Activated T-helper 1 cell treated with anti-CD3 and anti-CD28 coated beads, Interleukin-12 subunit alpha, Interleukin-12 subunit beta, Interleukin-2, Interleukin-4 antibody, amounts not matched to agents 30 ng/mL and 10 ng/mL and 1 ng/mL, durations not matched to agents 14 hours and 24 hours and 36 hours (primary cell): ENCODE measurements at regions of chr15 and their contacts with region 1.

Region 1: GRCh38 chr15:34223904-34224596 is 766 bp upstream of the EMC4 start:
- DNase-seq: no peak
- H3K4me3 Mint-ChIP-seq: peak overlapping the region; percentile 90
- H3K27ac Mint-ChIP-seq: peak overlapping the region; percentile 98
- H3K4me1 Mint-ChIP-seq: peaks cover 35% of the 10 kb centered on the region
- H3K27me3 Mint-ChIP-seq: no peaks in the 10 kb centered on the region

Region 2: DNA sequence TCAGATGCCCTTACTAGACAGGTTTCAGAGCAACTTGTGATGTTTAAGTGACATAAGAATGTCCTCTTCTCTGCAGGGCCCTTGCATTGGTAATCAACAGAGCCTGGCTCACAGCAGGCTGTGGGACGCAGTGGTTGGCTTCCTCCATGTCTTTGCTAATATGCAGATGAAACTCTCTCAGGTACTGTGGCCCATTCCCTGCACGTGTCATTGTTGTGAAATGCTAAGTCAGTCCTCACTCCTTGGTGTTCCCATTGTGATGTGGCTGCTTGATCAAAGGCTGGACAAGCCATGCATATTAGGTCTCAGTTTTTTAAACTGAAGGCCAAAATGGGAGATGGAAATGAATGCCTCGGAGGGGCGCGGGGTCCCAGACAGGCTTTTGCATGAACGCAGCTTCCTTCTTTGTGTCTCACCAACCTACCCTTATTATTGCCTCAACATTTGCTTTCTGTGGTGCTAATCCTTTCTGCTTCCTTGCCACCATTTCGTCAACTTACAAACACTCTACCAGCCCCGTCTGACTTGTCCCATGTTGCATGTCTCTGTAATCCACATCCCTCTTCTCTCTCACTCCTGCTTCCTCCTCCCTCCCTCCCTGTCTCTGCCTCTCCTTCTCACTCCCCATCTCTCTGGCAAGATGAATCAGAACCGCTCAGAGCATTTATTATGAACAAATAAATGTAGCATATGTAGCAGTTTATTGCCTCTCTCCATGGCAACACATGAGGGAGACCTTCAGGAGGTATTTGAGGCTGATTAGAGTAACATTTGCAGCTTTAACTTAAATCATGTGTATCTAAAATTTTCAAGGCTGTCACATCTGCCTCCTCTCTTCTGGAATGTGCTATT is 388.9 kb before region 1 on chr15:
- intact Hi-C with region 1: no loop called
- DNase-seq: no peak
- H3K4me3 Mint-ChIP-seq: no peak overlapping the region
- H3K27ac Mint-ChIP-seq: no peak overlapping the region
- H3K4me1 Mint-ChIP-seq: no peaks in the 10 kb centered on the region
- H3K27me3 Mint-ChIP-seq: no peaks in the 10 kb centered on the region

Region 3: GRCh38 chr15:34154725-34155204 is 69.3 kb before region 1 on chr15:
- intact Hi-C with region 1: no loop called
- DNase-seq: no peak
- H3K4me3 Mint-ChIP-seq: no peak overlapping the region
- H3K27ac Mint-ChIP-seq: no peak overlapping the region
- H3K4me1 Mint-ChIP-seq: no peaks in the 10 kb centered on the region
- H3K27me3 Mint-ChIP-seq: no peaks in the 10 kb centered on the region

Region 4: DNA sequence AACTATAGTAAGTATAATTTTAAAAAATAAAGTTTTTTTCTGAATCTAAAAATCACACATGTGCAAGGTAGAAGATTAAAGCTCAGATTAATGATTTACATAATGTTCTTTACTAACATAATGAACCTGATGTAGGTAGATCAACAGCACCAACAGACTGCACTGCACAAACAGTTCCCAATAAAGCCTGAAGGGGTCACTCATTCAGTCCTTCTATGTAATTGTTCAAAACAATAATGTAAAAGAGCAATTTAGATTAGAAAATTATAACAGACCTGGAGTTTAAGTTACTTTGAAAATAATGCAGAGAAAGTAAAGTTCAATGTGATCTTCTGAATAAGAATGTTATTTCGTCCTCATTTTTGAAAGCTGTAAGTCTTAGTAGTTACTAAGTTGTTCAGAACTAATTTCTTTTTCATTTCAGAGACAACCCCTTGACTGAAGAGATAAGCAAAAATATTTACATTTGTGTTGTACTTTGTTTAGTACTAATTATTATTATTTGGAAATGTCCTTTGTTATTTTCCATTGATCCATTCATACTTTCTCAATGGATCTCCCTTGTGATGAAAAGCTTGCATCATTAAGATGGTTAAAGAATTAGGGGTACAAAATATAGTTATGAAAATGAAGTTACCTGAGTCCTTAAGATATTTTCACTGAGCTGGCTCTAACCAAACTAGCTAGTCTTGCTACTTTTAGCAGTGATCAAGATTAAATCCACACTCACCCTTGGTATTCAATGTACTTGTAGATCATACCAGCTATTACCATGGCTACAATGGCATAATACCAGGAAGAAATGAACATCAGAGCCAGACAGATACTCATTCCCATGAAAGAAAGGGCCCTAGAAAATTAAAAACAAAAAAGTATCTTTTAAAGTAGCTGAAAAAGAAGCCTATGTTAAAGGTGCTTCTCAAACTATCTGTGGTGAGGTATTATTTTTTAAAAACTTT is 17.6 kb after region 1 on chr15:
- intact Hi-C with region 1: loop called (anchors 1 kb)
- DNase-seq: no peak
- H3K4me3 Mint-ChIP-seq: no peak overlapping the region
- H3K27ac Mint-ChIP-seq: no peak overlapping the region
- H3K4me1 Mint-ChIP-seq: peaks cover 38% of the 10 kb centered on the region
- H3K27me3 Mint-ChIP-seq: no peaks in the 10 kb centered on the region

Region 5: DNA sequence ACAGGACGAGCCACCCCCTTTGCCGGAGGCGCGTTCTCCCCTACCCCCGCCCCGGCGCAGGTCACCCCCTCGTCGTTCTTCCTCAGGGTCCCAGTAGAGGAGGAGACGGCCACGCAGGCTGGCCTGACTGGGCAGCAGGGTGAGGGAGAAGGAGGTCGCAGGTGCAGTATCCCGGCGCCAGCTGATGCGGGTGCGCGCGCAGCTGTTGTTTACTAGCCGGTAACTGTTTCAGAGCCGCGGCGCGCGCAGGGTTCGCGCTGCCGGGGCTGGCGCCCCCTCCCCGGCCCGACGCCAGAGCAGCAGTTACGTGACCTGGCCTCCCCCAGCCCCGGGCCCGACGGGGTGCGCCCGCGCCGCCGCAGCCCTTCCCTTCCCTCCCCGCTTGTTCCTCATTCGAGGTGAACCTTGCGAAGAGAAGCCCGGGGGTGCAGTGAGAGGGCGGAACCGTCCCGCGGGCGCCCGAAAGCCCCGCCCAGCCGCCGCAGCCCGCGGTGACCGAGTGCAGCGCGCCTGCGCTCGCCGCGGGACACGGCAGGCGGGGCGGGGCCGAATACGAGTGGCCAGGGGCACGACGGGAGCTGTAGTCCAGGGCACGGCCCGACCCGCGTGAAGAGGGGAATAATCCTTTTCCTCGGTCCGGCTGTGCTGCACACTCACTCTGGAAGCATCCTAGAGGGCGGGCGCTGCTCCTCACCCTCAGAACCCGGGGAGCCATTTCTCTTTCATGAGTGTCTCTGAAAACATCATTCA is 113.7 kb after region 1 on chr15 and contains the start of gene SLC12A6:
- intact Hi-C with region 1: loop called (anchors 1 kb)
- DNase-seq: peak; percentile 90
- H3K4me3 Mint-ChIP-seq: peak within 1 kb of the TSS; percentile 97
- H3K27ac Mint-ChIP-seq: peak within 1 kb of the TSS; percentile 97
- H3K4me1 Mint-ChIP-seq: peaks cover 66% of the 10 kb centered on the region
- H3K27me3 Mint-ChIP-seq: no peaks in the 10 kb centered on the region
- total RNA-seq, gene SLC12A6: 33.2 and 36.4 TPM in 2 replicates

Region 6: DNA sequence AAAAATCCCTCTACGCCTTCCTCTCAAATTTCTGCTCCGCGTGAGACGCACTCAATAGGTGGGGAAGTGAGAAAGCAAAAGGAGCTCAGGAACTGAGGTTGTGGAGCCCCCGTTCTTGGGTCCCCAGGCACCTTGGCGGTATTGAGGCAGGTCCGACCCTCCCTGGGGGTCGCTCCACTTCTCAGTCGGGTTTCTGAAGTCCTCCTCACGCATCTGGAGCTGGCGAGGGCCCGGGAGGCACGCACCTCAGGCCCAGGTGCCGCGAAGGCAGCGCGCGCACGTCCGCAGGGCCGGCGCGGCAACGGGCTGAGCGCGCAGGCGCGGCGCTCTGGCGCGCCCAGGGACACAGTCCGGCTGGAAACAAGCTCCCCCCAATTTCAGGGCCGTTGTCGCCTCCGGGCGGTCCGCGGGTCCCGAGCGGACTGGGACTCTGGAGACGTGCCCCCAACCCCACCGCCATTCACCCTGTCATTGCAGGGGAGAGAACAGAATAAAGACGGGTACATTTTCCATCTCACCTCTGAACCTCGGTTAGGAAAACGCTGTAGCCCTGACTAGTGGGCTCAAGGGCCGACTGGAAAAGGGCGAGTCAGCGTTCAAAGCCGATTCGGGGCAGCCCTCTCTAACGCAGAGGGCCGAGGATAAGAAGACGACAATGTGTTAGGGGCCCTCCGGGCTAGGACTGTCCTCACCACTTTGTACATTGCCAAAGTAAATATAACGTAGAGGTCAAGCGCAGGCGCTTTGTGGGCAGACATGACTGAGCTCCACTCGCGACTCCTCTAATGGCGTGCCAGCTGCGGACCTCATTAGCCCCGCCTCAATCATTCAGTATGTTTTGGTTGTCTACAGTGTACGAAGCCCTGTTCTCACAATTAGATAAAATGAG is 764.2 kb after region 1 on chr15 and contains the start of gene ZNF770:
- intact Hi-C with region 1: loop called (anchors 1 kb)
- DNase-seq: peak; percentile 84
- H3K4me3 Mint-ChIP-seq: peak within 1 kb of the TSS; percentile 97
- H3K27ac Mint-ChIP-seq: peak within 1 kb of the TSS; percentile 96
- H3K4me1 Mint-ChIP-seq: peaks cover 44% of the 10 kb centered on the region
- H3K27me3 Mint-ChIP-seq: no peaks in the 10 kb centered on the region
- total RNA-seq, gene ZNF770: 50.1 and 50.6 TPM in 2 replicates